ENCODE measurements at regions of chr17 and their contacts with region 1.

Region 1: DNA sequence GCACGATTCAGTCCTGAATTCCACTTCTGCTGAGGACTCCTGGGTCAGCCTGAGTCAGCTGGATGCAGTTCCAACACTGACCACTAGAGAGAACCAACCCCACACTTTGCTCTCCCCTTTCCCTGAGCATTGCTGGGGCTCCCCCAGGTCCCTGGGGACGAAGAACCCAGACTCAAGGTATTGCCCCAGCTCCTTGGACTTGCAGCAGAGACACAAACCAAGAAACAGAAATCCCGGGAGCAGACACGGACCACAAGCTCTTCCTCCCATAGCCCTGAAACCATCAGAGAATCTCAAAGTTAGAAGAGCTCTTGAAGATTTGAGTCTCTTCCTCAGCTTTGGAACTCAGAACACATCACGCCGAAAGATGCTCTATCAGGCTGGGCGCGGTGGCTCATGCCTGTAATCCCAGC is 678 bp upstream of the GH1 start:
- DNase-seq: peak; percentile 67 to 92
- ATAC-seq: peak; percentile 83 to 97
- H3K4me3 ChIP-seq: no peak overlapping the region
- H3K27ac ChIP-seq: no peak overlapping the region
- H3K4me1 ChIP-seq: no peaks in the 10 kb centered on the region; the same call in 2 of the 3 replicates
- CTCF ChIP-seq: peak; percentile 90
- EP300 ChIP-seq: no peak
- POLR2A ChIP-seq: no peak
- RAD21 ChIP-seq: peak; percentile 91 to 95

Region 2: GRCh38 chr17:63827002-63827771 is 92.1 kb before region 1 on chr17 and contains the starts of genes FTSJ3 and PSMC5:
- CTCF ChIA-PET with region 1: no interaction called
- POLR2A ChIA-PET with region 1: no interaction called
- DNase-seq: peak; percentile 97
- ATAC-seq: peak; percentile 89 to 93
- H3K4me3 ChIP-seq: peak within 1 kb of the TSS; percentile 74
- H3K27ac ChIP-seq: peak within 1 kb of the TSS; percentile 94 to 96
- H3K4me1 ChIP-seq: peaks cover 22% of the 10 kb centered on the region
- CTCF ChIP-seq: peak; percentile 49
- EP300 ChIP-seq: no peak
- POLR2A ChIP-seq: peak; percentile 94
- RAD21 ChIP-seq: no peak
- polyA plus RNA-seq, gene FTSJ3: 62.6 and 74.5 TPM in 2 replicates
- polyA plus RNA-seq, gene PSMC5: 222 and 303 TPM in 2 replicates

Region 3: GRCh38 chr17:63904316-63904715 is 15.0 kb before region 1 on chr17:
- CTCF ChIA-PET with region 1: interaction called, 70 read pairs
- POLR2A ChIA-PET with region 1: no interaction called
- DNase-seq: no peak
- ATAC-seq: no peak
- H3K4me3 ChIP-seq: no peak overlapping the region
- H3K27ac ChIP-seq: no peak overlapping the region
- H3K4me1 ChIP-seq: no peaks in the 10 kb centered on the region; the same call in 2 of the 3 replicates
- CTCF ChIP-seq: no peak
- EP300 ChIP-seq: no peak
- POLR2A ChIP-seq: no peak
- RAD21 ChIP-seq: no peak

Region 4: DNA sequence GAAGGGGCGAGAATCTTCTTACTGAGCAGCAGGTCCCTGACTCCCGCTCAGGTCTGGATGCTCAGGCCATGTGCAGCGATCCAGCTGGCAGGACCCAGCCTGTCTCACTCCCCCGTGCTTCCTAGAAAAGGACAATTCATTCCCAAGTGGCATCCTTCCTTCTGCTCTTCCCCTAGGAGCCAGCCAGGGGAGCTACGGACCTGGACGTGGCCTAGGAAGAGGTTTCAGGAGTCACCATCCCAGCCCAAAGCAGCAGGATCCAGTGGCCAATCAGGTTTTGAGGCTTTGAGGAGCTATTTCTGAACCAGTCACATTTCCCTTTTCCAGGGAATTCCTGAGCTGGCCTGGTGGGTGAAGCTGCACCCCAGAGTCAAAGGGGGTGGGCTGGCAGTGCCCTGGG is 20.6 kb after region 1 on chr17:
- CTCF ChIA-PET with region 1: interaction called, 132 read pairs
- POLR2A ChIA-PET with region 1: no interaction called
- DNase-seq: no peak
- ATAC-seq: peak; percentile 18 to 54; a peak in 4 of 6 replicates
- H3K4me3 ChIP-seq: no peak overlapping the region
- H3K27ac ChIP-seq: no peak overlapping the region
- H3K4me1 ChIP-seq: no peaks in the 10 kb centered on the region
- CTCF ChIP-seq: no peak
- EP300 ChIP-seq: no peak
- POLR2A ChIP-seq: no peak
- RAD21 ChIP-seq: no peak

Region 5: DNA sequence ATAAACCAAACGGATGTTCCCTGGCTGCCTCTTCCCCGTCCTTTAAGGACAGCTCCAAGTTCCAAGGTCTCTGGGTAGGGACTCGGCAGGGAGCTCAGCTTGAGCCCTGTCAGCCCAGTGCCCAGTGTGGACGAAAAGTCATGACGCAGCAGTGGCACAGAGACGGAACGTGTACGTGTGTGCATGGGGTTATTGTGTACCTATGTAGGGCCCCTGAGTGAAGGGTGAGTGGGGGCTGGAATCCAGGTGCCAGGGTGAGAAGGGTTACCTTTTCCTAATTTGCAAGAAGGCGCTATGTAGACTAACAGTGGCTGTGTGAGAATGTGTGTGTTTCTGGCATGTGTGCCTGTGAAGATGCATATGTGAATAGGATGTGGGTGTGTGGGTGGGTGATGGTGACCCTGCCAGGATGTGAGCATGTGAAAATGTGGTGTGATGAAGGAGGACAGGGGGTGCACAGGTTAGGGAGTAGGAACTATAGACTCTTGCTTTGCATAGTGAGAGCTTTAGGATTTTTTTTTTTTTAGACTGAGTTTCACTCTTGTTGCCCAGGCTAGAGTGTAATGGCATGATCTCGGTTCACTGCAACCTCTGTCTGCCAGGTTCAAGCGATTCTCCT is 47.4 kb after region 1 on chr17:
- CTCF ChIA-PET with region 1: interaction called, 18 read pairs
- POLR2A ChIA-PET with region 1: no interaction called
- DNase-seq: no peak
- ATAC-seq: 0 out of 6 replicates have a peak, but pooled peaks of 1 of the 2 experiments have one; percentile 25
- H3K4me3 ChIP-seq: no peak overlapping the region
- H3K27ac ChIP-seq: no peak overlapping the region
- H3K4me1 ChIP-seq: 0 out of 3 replicates have a peak, but pooled peaks cover 2% of the 10 kb centered on the region
- CTCF ChIP-seq: no peak
- EP300 ChIP-seq: no peak
- POLR2A ChIP-seq: no peak
- RAD21 ChIP-seq: no peak

Region 6: DNA sequence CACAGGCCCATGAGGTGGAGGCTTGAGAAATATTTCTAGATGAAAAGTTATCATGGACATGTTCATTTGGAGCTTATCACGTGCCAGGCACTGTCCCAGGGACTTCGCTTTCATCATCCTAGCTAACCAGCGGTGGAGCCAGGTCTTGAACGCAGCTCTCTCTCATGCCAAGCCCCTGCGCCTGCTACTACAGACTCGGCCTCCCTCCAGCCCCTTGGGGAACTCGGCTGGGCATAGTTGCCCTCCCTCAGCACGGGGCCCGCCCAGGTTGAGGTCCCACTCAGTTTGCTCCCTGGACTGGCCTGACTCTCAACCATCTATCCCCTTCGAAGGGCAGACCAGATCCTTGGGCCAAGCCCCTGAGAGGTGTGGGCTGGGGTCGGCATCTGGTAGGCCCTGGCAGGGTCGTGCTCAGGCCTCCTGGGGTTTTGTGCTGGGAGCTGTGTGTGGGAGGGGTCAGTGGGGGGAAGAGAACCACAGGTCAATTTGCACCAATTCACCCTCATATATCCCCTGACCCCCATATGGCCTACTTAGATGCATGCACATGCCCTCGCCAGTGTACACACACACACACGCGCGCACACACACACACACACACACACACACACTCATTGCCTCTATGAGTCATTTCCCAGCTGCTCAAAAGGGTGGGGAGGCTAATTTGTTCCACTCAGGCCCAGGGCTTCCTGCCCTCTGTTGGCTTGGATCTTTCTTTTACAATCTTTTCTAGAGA is 65.5 kb after region 1 on chr17:
- CTCF ChIA-PET with region 1: interaction called, 150 read pairs
- POLR2A ChIA-PET with region 1: no interaction called
- DNase-seq: peak in 1 of 2 experiments; percentile 41
- ATAC-seq: no peak
- H3K4me3 ChIP-seq: no peak overlapping the region
- H3K27ac ChIP-seq: no peak overlapping the region
- H3K4me1 ChIP-seq: peaks cover 6% of the 10 kb centered on the region; the same call in 1 of the 3 replicates
- CTCF ChIP-seq: no peak
- EP300 ChIP-seq: no peak
- POLR2A ChIP-seq: no peak
- RAD21 ChIP-seq: no peak

Region 7: DNA sequence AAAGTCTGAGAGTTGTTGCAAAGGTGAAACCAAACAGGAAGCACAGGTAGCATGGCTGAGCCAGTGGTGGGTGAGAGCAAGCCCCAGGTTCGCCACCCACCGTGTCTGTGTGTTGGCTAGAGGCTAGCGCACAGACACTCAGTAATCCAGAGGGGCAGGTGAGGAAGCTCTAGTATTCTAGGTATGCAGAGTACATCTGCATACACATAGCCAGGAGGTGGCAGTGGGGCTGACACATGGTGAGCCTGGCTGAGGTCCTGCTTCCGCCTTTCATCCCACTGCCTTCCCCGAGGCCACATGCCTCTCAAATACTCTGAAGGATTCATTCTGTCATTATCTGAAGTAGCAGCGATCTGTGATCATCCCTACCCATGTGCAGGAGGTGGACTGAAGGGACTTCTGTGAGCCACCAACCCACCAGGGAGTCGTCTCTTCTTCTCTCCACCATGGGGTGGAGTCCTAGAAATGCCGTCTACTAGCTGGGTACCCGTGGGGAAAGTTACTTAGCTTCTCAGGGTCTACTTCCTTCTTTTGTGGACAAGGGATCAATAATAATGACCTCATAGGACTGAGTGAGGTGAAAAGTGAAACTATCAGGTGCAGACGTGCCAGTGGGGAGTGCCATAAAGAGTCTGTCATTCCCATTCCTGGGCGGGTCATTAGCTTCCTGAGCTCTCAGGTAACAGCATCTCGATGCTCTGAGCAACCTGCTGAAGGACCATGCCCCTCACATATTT is 137.1 kb after region 1 on chr17:
- CTCF ChIA-PET with region 1: interaction called, 20 read pairs
- POLR2A ChIA-PET with region 1: no interaction called
- DNase-seq: no peak
- ATAC-seq: peak in 1 of 2 experiments; percentile 28; a peak in 3 of 6 replicates
- H3K4me3 ChIP-seq: no peak overlapping the region
- H3K27ac ChIP-seq: peak overlapping the region in 1 of 2 experiments; percentile 11; a peak in 1 of 6 replicates
- H3K4me1 ChIP-seq: peaks cover 29% of the 10 kb centered on the region
- CTCF ChIP-seq: no peak
- EP300 ChIP-seq: no peak
- POLR2A ChIP-seq: no peak
- RAD21 ChIP-seq: no peak

Region 8: GRCh38 chr17:64281962-64282727 is 362.8 kb after region 1 on chr17:
- CTCF ChIA-PET with region 1: interaction called, 15 read pairs
- POLR2A ChIA-PET with region 1: no interaction called
- DNase-seq: peak; percentile 68 to 88
- ATAC-seq: peak; percentile 64 to 87; a peak in 5 of 6 replicates
- H3K4me3 ChIP-seq: no peak overlapping the region
- H3K27ac ChIP-seq: peak overlapping the region in 1 of 2 experiments; percentile 27; a peak in 1 of 6 replicates
- H3K4me1 ChIP-seq: no peaks in the 10 kb centered on the region
- CTCF ChIP-seq: peak; percentile 92
- EP300 ChIP-seq: no peak
- POLR2A ChIP-seq: no peak
- RAD21 ChIP-seq: peak; percentile 87 to 94